Activated CD4-positive, alpha-beta T cell treated with anti-CD3 and anti-CD28 coated beads for 36 hours (primary cell): ENCODE measurements at regions of chr1 and their contacts with region 1.

Region 1: DNA sequence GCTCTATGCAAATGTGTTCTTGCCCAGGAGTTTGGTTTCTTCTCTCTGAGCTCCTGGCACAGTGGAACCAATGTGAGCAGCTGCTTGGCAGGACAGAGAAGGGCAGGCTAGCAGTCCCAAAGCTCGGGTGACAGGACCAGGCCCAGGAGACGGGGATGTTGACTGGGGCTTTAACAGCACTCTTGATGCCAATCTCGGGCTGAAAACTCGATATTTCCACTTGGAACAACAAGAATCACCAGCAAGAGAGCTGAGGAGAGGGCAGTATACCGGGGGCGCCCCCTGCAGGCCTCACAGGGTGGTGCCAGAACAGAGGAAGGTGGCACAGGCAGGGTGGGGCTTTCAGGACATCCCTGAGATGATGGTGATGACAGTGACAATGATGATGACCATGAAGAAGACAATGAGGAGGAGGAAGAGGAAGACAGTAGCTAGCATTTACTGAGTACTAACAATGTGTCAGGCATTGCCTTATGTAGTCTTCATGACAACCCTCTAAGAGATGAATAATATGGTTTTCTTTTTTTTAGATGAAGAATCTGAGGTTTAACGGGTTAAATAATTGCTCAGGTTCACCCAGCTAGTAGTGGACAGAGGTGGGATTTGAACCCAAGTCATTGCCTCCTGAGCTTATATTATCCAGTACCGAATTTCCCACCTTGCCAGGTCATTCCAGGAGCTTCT is 2.7 kb upstream of the KCNJ9 start:
- DNase-seq: peak; percentile 84
- ATAC-seq: peak; percentile 93
- H3K4me3 Mint-ChIP-seq: no peak overlapping the region
- H3K27ac Mint-ChIP-seq: no peak overlapping the region
- H3K4me1 Mint-ChIP-seq: peaks cover 18% of the 10 kb centered on the region
- H3K27me3 Mint-ChIP-seq: peaks cover 48% of the 10 kb centered on the region

Region 2: GRCh38 chr1:159881930-159882839 is 196.5 kb before region 1 on chr1:
- CTCF ChIA-PET with region 1: no interaction called
- POLR2A ChIA-PET with region 1: no interaction called
- intact Hi-C with region 1: no loop called
- DNase-seq: peak; percentile 53
- ATAC-seq: no peak
- H3K4me3 Mint-ChIP-seq: no peak overlapping the region
- H3K27ac Mint-ChIP-seq: no peak overlapping the region
- H3K4me1 Mint-ChIP-seq: no peaks in the 10 kb centered on the region
- H3K27me3 Mint-ChIP-seq: no peaks in the 10 kb centered on the region

Region 3: GRCh38 chr1:159936273-159936904 is 142.3 kb before region 1 on chr1:
- CTCF ChIA-PET with region 1: interaction called, 5 read pairs
- POLR2A ChIA-PET with region 1: no interaction called
- intact Hi-C with region 1: loop called (anchors 1 to 5 kb)
- DNase-seq: peak; percentile 90
- ATAC-seq: peak; percentile 89
- H3K4me3 Mint-ChIP-seq: no peak overlapping the region
- H3K27ac Mint-ChIP-seq: no peak overlapping the region
- H3K4me1 Mint-ChIP-seq: peaks cover 5% of the 10 kb centered on the region
- H3K27me3 Mint-ChIP-seq: peaks cover 4% of the 10 kb centered on the region

Region 4: DNA sequence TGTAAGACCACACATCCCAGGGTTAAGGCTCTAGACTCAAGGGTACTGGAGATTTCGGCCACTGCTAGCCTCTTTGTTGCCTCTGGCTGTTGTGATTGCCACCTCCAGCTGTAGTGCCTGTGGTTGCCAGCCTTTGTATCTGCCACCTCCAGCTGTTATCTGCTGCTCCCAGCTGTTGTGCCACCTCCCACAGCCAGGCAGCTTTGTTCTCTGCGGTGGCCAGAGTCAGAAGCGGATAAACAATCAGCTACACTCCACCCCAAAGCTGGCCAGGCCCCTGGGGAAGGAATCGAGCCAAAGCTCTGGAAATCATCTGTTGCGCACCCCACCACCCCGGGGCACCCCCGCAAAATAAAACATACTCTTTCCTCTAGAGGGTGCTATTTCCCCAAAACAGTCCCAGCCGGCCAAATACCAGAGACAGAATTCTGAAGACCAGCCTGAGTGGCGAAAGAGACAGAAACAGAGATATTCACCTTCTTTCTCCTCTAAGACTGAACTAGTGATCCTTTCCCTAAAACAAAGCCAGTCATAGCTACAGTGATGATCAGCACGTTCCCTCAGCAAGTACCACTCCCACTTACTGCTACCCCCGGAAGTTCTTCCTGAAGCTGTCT is 32.1 kb before region 1 on chr1:
- CTCF ChIA-PET with region 1: interaction called, 636 read pairs
- POLR2A ChIA-PET with region 1: no interaction called
- intact Hi-C with region 1: loop called (anchors 1 to 2 kb)
- DNase-seq: peak; percentile 67
- ATAC-seq: peak; percentile 87
- H3K4me3 Mint-ChIP-seq: peak overlapping the region; percentile 55
- H3K27ac Mint-ChIP-seq: peak overlapping the region; percentile 81
- H3K4me1 Mint-ChIP-seq: peaks cover 12% of the 10 kb centered on the region
- H3K27me3 Mint-ChIP-seq: peaks cover 13% of the 10 kb centered on the region

Region 5: DNA sequence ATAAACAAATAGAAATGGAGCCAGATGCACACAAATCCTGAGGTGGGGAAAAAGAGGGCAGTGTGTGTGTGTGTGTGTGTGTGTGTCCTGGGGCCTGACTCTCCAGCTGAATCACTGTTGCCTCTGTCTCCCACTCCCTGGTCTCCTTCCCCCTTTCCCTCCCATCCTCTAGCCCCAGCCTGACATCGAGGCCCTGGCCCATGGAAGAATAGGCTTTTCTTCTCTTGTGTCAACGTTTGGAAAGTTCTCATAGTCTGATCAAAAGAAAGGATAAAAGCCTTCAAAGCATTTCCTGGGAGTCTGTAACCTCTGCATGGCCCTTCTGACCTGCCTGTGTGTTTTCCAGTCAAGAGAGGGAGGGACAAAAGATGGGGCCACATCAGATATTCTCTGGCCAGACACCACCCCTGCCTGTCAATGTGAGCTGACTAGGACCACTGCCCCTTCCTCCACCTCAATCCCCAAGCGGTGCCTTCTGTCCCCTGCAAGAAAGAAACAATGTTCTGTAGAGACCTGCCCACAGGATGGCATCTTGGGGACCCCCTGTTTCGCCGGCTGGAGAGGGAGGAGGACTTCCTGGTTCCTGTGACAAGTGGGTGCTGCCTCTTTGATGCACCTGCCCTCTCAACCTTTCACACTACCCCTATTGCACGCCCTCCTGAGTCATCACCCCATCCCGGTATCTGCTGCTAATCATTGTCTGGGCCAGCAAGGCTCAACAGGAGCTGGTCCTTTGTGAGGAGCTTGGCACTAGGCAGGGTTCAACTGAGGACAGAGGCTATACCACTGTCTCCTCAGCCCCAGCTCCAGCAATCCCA is 24.9 kb before region 1 on chr1:
- CTCF ChIA-PET with region 1: interaction called, 636 read pairs
- POLR2A ChIA-PET with region 1: interaction called, 10 read pairs
- intact Hi-C with region 1: no loop called
- DNase-seq: no peak
- ATAC-seq: no peak
- H3K4me3 Mint-ChIP-seq: no peak overlapping the region
- H3K27ac Mint-ChIP-seq: no peak overlapping the region
- H3K4me1 Mint-ChIP-seq: no peaks in the 10 kb centered on the region
- H3K27me3 Mint-ChIP-seq: peaks cover 14% of the 10 kb centered on the region